Activated CD4-positive, alpha-beta memory T cell treated with anti-CD3 and anti-CD28 coated beads for 36 hours (primary cell): ENCODE measurements at regions of chr17 and their contacts with region 1.

Region 1: GRCh38 chr17:44186307-44187130 is at the start of gene TMUB2:
- DNase-seq: peak; percentile 100
- H3K4me3 Mint-ChIP-seq: peak within 1 kb of the TSS; percentile 94
- H3K27ac Mint-ChIP-seq: peak within 1 kb of the TSS; percentile 97
- H3K4me1 Mint-ChIP-seq: peaks cover 43% of the 10 kb centered on the region
- H3K27me3 Mint-ChIP-seq: no peaks in the 10 kb centered on the region
- total RNA-seq, gene TMUB2: 21.8 to 21.9 TPM

Region 2: DNA sequence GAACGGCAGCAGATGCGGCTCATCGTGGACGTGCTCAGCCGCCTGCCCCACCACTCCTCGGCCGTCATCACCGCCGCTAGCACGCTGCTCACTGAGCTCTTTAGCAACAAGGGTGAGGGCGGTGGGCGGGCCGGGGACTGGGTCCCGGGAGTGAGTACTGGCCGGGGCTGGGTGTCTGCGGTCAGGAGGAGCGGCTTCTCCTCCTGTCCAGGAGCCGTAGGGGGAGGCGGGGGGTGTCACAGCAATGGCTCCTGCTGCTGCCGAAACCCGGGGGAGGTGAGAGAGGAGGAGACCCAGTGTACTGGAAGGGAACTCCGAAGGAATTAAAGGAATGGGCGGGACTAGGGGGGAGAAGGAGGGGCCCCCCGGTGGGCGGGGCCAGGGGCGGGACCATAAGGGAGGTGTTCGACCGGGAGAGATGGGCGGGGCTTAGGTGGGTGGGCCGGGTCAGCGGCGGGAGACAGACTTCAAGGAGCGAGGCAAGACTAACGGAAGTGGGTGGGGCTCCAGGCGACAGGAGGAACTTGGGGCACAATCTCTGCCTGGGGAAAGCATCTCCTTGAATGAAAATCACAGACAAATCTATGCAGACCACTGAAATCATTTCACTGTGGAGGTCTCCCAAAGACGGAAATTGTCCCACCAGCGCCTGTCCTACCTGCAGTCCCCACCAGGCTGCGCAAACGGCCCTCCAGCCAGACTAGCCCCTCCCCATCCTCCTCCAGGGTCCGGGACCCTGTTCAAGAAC is 179.7 kb before region 1 on chr17:
- CTCF ChIA-PET with region 1: no interaction called
- POLR2A ChIA-PET with region 1: no interaction called
- intact Hi-C with region 1: loop called (anchors 1 kb)
- DNase-seq: peak; percentile 100
- H3K4me3 Mint-ChIP-seq: peak overlapping the region; percentile 86
- H3K27ac Mint-ChIP-seq: peak overlapping the region; percentile 3
- H3K4me1 Mint-ChIP-seq: peaks cover 23% of the 10 kb centered on the region
- H3K27me3 Mint-ChIP-seq: peaks cover 6% of the 10 kb centered on the region

Region 3: DNA sequence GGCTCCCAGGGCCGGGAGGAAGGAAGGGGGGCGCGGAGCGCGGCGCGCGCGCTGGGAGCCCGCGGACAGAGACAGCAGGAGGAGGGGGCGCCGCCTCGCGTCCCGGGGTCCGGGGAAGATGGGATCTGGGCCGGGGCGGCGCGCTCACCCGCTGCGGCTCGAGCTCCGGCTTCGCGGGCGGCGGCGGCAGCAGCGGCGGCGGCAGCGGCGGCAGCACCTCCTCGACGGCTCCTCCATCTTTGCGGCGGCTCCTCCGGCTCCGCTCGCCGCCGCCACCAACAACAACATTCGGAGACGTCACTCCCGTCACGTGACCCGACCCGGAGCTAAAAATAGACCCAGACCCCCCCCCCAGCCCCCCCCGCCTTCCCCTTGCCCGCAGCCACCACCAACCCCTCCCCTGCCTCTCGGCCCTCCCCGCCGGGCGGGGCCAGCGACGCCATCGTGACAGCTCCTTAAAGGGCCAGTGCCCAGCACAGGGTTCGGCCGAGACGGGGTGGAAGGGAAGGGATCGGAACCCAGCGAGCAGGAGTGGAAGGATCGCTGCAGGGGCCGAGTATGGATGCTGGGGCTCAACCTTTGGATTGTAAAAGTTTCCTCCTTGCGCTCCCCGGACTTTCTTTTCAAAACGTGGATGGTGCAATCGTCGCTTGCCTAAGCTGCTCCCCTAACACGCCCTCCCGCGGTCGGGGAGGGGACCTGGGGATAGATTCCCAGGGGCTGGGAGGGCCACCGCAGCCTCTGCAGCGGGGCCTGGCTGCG is 63.0 kb before region 1 on chr17 and contains the start of gene HDAC5:
- CTCF ChIA-PET with region 1: interaction called, 4 read pairs
- POLR2A ChIA-PET with region 1: interaction called, 8 read pairs
- intact Hi-C with region 1: loop called (anchors 2 kb)
- DNase-seq: peak; percentile 97
- H3K4me3 Mint-ChIP-seq: peak within 1 kb of the TSS; percentile 86
- H3K27ac Mint-ChIP-seq: peak within 1 kb of the TSS; percentile 92
- H3K4me1 Mint-ChIP-seq: peaks cover 25% of the 10 kb centered on the region
- H3K27me3 Mint-ChIP-seq: no peaks in the 10 kb centered on the region
- total RNA-seq, gene HDAC5: 18.0 to 19.0 TPM

Region 4: GRCh38 chr17:44167181-44167861 is 19.2 kb before region 1 on chr17:
- CTCF ChIA-PET with region 1: interaction called, 22 read pairs
- POLR2A ChIA-PET with region 1: no interaction called
- intact Hi-C with region 1: no loop called
- DNase-seq: no peak
- H3K4me3 Mint-ChIP-seq: no peak overlapping the region
- H3K27ac Mint-ChIP-seq: no peak overlapping the region
- H3K4me1 Mint-ChIP-seq: peaks cover 9% of the 10 kb centered on the region
- H3K27me3 Mint-ChIP-seq: no peaks in the 10 kb centered on the region

Region 5: GRCh38 chr17:44210342-44211192 is 24.0 kb after region 1 on chr17:
- CTCF ChIA-PET with region 1: interaction called, 33 read pairs
- POLR2A ChIA-PET with region 1: interaction called, 14 read pairs
- intact Hi-C with region 1: no loop called
- DNase-seq: peak; percentile 95
- H3K4me3 Mint-ChIP-seq: peak overlapping the region; percentile 70
- H3K27ac Mint-ChIP-seq: peak overlapping the region; percentile 92
- H3K4me1 Mint-ChIP-seq: peaks cover 64% of the 10 kb centered on the region
- H3K27me3 Mint-ChIP-seq: no peaks in the 10 kb centered on the region

Region 6: DNA sequence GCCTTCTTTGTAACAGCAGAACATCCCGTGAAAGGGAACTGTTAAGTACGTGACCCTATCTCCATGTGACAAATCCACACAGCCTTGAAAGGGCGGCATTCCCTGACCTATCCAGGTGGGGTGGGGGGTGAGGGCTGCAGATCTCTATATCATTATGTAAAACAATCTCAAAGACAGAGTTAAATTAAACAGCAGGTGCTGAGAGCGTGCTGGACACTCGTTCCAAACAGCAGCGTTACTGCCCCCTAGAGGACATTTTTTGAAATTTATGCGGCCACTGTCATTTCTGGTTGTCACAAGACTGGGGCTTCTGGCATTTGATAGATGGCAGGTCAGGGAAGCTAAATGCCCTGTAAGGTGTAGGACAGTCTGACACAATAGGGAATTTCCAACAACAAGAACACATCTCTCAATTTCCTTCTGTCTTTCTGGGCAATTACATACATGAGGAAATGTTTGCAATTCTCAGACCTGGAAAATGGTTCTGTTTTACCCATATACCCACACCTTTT is 144.8 kb after region 1 on chr17:
- CTCF ChIA-PET with region 1: interaction called, 15 read pairs
- POLR2A ChIA-PET with region 1: no interaction called
- intact Hi-C with region 1: no loop called
- DNase-seq: peak; percentile 80
- H3K4me3 Mint-ChIP-seq: no peak overlapping the region
- H3K27ac Mint-ChIP-seq: peak overlapping the region; percentile 38
- H3K4me1 Mint-ChIP-seq: peaks cover 12% of the 10 kb centered on the region
- H3K27me3 Mint-ChIP-seq: no peaks in the 10 kb centered on the region